CD4-positive, alpha-beta memory T cell (primary cell): ENCODE measurements at regions of chr11 and their contacts with region 1.

Region 1: DNA sequence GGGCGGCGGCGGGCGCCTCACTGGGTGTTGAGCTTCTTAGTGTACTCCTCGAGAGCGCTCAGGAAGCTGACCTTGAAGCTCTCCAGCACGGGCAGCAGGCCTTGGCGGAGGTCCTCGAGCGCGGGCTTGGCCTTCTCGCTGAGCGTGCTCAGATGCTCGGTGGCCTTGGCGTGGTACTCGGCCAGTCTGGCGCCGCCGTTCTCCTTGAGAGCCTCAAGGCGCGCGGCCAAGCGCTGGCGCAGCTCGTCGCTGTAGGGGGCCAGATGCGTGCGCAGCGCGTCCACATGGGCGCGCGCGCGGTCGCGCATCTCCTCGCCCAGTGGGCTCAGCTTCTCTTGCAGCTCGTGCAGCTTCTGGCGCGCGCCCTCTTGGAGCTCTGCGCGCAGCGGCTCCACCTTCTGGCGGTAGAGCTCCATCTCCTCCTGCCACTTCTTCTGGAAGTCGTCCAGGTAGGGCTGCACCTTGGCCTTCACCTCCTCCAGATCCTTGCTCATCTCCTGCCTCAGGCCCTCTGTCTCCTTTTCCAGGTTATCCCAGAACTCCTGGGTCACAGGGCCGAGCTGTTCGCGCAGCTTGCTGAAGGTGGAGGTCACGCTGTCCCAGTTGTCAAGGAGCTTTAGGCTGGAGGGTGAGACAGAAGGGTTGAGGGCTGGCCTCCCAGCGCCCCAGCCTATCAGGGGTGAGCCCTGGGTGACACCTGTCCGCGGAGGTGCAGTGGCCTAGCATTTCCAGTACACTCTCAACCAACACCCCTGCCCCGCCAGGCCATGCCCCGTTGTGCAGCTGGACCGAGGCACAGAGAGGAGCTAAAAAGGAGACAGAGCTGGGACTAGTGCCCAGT is 1.4 kb downstream of the APOA1 start:
- DNase-seq: peak; percentile 78 to 82 (median 80)
- H3K4me3 ChIP-seq: peak overlapping the region; percentile 36 to 60
- H3K4me3 Mint-ChIP-seq: peak overlapping the region; percentile 67 to 87 (median 78)
- H3K27ac ChIP-seq: no peak overlapping the region
- H3K27ac Mint-ChIP-seq: peak overlapping the region in 6 of 7 donors; percentile 29 to 76 (median 64)
- H3K4me1 ChIP-seq: peaks cover 15% of the 10 kb centered on the region
- H3K4me1 Mint-ChIP-seq: peaks cover 4 to 21% (median 9%) of the 10 kb centered on the region in 4 donors
- H3K27me3 ChIP-seq: no peaks in the 10 kb centered on the region
- H3K27me3 Mint-ChIP-seq: no peaks in the 10 kb centered on the region

Region 2: GRCh38 chr11:116610190-116610589 is 225.8 kb before region 1 on chr11:
- CTCF ChIA-PET with region 1: no interaction called
- POLR2A ChIA-PET with region 1: no interaction called
- intact Hi-C with region 1: no loop called
- DNase-seq: no peak
- H3K4me3 ChIP-seq: no peak overlapping the region
- H3K4me3 Mint-ChIP-seq: no peak overlapping the region
- H3K27ac ChIP-seq: no peak overlapping the region
- H3K27ac Mint-ChIP-seq: no peak overlapping the region
- H3K4me1 ChIP-seq: no peaks in the 10 kb centered on the region
- H3K4me1 Mint-ChIP-seq: no peaks in the 10 kb centered on the region
- H3K27me3 ChIP-seq: no peaks in the 10 kb centered on the region
- H3K27me3 Mint-ChIP-seq: peaks cover 12 to 25% of the 10 kb centered on the region in 2 donors

Region 3: GRCh38 chr11:116742104-116742503 is 93.9 kb before region 1 on chr11:
- CTCF ChIA-PET with region 1: interaction called, 10 read pairs
- POLR2A ChIA-PET with region 1: no interaction called
- intact Hi-C with region 1: no loop called
- DNase-seq: no peak
- H3K4me3 ChIP-seq: no peak overlapping the region
- H3K4me3 Mint-ChIP-seq: no peak overlapping the region
- H3K27ac ChIP-seq: no peak overlapping the region
- H3K27ac Mint-ChIP-seq: no peak overlapping the region
- H3K4me1 ChIP-seq: no peaks in the 10 kb centered on the region
- H3K4me1 Mint-ChIP-seq: no peaks in the 10 kb centered on the region
- H3K27me3 ChIP-seq: no peaks in the 10 kb centered on the region
- H3K27me3 Mint-ChIP-seq: no peaks in the 10 kb centered on the region

Region 4: GRCh38 chr11:116787786-116788486 is 48.1 kb before region 1 on chr11 and contains the start of gene ZPR1:
- CTCF ChIA-PET with region 1: interaction called, 189 read pairs
- POLR2A ChIA-PET with region 1: interaction called, 26 read pairs
- intact Hi-C with region 1: loop called (anchors 1 kb)
- DNase-seq: peak; percentile 86 to 89 (median 86)
- H3K4me3 ChIP-seq: peak within 1 kb of the TSS; percentile 55 to 90
- H3K4me3 Mint-ChIP-seq: peak within 1 kb of the TSS; percentile 91 to 98 (median 97)
- H3K27ac ChIP-seq: peak within 1 kb of the TSS; percentile 84
- H3K27ac Mint-ChIP-seq: peak within 1 kb of the TSS; percentile 96 to 99 (median 98)
- H3K4me1 ChIP-seq: peaks cover 40% of the 10 kb centered on the region
- H3K4me1 Mint-ChIP-seq: peaks cover 30 to 66% (median 45%) of the 10 kb centered on the region in 4 donors
- H3K27me3 ChIP-seq: no peaks in the 10 kb centered on the region
- H3K27me3 Mint-ChIP-seq: peaks cover 0 to 2% of the 10 kb centered on the region in 2 donors
- total RNA-seq, gene ZPR1: 59.5 to 73.4 TPM

Region 5: GRCh38 chr11:116821050-116821918 is 14.7 kb before region 1 on chr11:
- CTCF ChIA-PET with region 1: interaction called, 10 read pairs
- POLR2A ChIA-PET with region 1: interaction called, 3 read pairs
- intact Hi-C with region 1: no loop called
- DNase-seq: no peak
- H3K4me3 ChIP-seq: no peak overlapping the region
- H3K4me3 Mint-ChIP-seq: no peak overlapping the region
- H3K27ac ChIP-seq: no peak overlapping the region
- H3K27ac Mint-ChIP-seq: peak overlapping the region in 1 of 7 donors; percentile 1
- H3K4me1 ChIP-seq: no peaks in the 10 kb centered on the region
- H3K4me1 Mint-ChIP-seq: no peaks in the 10 kb centered on the region
- H3K27me3 ChIP-seq: no peaks in the 10 kb centered on the region
- H3K27me3 Mint-ChIP-seq: no peaks in the 10 kb centered on the region

Region 6: GRCh38 chr11:116861539-116861938 is 25.5 kb after region 1 on chr11:
- CTCF ChIA-PET with region 1: interaction called, 168 read pairs
- POLR2A ChIA-PET with region 1: interaction called, 3 read pairs
- intact Hi-C with region 1: no loop called
- DNase-seq: no peak
- H3K4me3 ChIP-seq: no peak overlapping the region
- H3K4me3 Mint-ChIP-seq: no peak overlapping the region
- H3K27ac ChIP-seq: no peak overlapping the region
- H3K27ac Mint-ChIP-seq: peak overlapping the region in 6 of 7 donors; percentile 45 to 83 (median 67)
- H3K4me1 ChIP-seq: peaks cover 7% of the 10 kb centered on the region
- H3K4me1 Mint-ChIP-seq: peaks cover 7 to 21% (median 11%) of the 10 kb centered on the region in 4 donors
- H3K27me3 ChIP-seq: no peaks in the 10 kb centered on the region
- H3K27me3 Mint-ChIP-seq: no peaks in the 10 kb centered on the region